Ascending aorta (tissue), 2 donors: ENCODE measurements at regions of chr11 and their contacts with region 1.

Region 1: DNA sequence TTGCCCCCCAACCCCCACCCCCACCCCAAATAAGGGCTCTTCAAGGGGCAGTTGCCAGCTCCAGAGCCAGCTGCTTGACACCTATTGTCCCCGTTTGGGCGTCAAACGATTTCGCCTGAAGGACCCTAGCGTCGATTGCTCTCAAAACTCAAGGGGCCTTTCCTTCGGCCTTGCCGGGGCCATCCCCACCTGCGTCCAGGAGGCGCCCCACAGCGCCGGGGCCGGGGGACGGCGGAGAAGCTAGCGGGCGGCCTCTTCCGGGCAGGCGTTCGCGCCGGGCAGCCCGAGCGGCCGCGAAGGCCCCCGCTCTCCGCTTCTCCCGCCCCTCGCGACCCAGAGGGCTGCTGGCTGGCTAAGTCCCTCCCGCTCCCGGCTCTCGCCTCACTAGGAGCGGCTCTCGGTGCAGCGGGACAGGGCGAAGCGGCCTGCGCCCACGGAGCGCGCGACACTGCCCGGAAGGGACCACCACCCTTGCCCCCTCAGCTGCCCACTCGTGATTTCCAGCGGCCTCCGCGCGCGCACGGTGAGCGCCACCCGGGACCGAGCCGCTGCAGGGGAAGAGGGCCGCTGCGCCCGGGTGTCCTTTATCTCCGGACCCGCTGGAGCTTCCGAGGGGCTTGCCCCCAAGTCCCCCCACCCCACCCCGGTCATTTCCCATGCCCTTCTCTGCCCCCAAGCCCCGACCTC is at the start of gene CAPRIN1:
- DNase-seq: peak; percentile 23 to 91
- H3K4me3 ChIP-seq: peak within 1 kb of the TSS; percentile 92 to 99
- H3K27ac ChIP-seq: peak within 1 kb of the TSS; percentile 98 to 100
- H3K4me1 ChIP-seq: peaks cover 6 to 26% of the 10 kb centered on the region in 2 donors
- H3K27me3 ChIP-seq: no peaks in the 10 kb centered on the region
- CTCF ChIP-seq: peak in 1 of 3 experiments; percentile 8
- total RNA-seq, gene CAPRIN1: 155 TPM

Region 2: DNA sequence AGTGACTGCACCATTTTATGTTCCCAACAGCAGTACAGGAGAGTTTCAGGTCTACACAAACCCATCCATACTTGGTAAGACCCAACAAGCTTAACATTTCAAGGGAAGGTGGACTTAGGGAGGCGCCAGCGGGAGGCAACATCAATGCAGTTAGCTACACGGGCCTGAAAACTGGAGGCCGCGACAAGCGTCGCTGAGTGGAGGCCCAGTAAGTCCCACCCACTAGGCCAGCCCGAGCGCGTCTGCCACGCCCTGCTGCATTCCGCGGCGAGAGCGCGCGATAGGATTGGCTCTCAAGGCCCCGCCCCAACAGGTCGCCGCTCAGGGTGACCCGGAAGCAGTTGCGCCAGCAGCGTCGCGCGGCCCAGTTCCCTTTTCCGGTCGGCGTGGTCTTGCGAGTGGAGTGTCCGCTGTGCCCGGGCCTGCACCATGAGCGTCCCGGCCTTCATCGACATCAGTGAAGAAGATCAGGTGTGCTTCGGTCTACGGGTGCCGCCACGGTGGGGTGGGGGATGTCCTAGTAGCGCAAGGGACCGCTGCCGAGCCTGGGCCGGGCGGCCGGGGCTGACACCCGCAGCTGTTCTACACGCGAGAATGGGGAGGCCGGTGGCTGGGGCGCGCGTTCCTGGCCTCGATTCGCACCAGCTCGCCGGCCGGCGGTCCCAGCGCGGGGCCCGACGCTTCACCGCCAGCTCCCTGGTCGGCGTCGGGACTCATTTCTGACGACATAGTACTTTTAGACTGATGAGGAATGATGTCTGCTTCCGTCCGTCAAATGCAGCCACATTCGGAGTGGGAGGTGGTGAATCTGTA is 1467.8 kb before region 1 on chr11 and contains the start of gene EIF3M:
- intact Hi-C with region 1: loop called (anchors 5 kb)
- DNase-seq: peak; percentile 82 to 97
- H3K4me3 ChIP-seq: peak within 1 kb of the TSS; percentile 73 to 94
- H3K27ac ChIP-seq: peak within 1 kb of the TSS; percentile 64 to 86
- H3K4me1 ChIP-seq: peaks cover 7 to 9% of the 10 kb centered on the region in 2 donors
- H3K27me3 ChIP-seq: no peaks in the 10 kb centered on the region
- CTCF ChIP-seq: no peak
- total RNA-seq, gene EIF3M: 149 TPM

Region 3: DNA sequence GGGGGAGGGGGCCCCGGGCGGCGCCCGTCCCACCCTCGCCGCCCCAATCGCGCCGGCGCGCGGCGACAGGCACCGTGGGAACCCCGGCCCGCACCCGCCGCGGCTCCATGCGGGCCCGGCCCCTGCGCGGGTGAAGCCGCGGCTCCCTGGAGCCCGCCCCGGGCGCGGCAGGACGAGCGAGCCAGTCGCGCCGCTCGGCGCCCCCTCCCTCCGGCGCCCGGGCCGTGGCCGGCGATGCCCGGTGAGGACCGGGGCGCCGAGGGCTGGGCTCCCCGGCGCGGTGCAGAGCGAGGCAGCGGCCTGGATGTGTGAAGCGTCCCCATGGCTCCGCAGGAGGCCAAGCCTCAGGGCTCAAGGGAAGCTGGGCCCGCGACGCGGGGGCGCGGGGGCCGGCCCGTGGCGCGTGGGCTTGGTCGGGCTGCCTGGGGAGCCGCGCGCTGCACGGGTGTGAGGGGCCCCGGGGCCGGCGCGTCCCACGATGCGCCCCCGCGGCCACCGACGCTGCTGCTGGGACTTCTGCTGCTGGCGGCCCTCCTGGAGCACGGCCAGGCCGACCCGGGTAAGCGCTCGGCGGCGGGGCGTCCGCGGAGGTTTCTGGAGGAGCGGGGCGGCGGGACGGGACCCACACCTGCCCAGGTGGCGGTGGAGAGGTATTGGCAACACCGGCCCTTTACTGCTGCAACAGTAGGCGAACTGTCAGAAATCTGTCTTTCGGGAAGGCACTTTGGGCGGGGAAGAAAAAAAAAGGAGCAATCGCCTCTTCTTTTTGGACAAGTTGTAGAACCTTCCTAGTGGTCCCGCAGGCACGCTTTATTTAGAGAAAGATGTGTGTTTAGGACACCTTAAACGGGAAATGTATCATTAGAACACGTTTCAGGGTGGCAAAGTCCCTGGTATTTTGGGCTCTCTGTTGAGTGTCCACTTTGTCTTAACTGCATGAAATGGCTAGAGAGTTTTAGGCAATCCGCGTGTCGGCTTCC is 674.9 kb before region 1 on chr11:
- intact Hi-C with region 1: no loop called
- DNase-seq: no peak
- H3K4me3 ChIP-seq: peak overlapping the region; percentile 49 to 70
- H3K27ac ChIP-seq: no peak overlapping the region
- H3K4me1 ChIP-seq: peaks cover 0 to 4% of the 10 kb centered on the region in 2 donors
- H3K27me3 ChIP-seq: no peaks in the 10 kb centered on the region
- CTCF ChIP-seq: no peak

Region 4: DNA sequence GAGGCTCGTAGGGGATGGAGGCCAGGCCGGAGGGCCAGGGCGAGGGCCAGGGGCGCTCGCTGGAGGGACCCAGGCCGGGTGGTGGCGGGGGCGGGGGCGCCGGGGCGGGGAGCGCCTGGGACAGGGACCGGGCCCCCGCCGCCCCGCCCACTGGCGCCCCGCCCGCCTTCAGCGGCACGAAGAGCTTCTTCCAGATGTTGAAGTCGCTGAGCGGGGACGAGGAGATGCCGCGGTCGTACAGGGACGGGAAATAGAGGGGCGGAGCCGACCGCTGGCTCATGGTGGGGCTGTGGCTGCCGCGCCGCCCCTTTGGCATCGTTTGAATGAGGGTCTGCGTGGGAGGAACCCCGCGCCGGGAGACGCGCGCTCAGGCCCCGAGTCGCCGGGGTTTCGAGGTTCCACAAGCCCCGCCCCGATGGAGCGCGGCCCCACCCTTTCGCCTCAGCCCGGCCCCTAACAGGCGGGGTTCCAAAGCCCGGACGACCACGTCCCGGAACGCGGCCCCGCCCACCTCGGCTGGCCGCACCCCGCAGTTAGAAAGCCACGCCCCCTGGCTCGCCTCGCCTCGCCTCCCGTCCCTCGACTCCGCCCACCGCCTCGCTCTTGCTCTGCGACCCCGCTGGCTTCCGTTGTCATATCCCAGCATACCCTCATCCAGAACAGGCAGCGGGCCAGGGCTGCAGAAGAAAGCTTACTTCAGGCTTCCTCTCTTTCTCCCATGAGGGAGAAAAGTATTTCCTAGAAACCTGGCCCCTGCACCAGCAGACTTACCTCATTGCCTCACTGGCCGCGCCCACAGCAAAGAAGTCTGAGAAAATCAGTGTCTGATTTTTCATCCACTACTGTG is 350.8 kb before region 1 on chr11 and contains the start of gene C11orf91:
- intact Hi-C with region 1: loop called (anchors 5 kb)
- DNase-seq: peak; percentile 72 to 96
- H3K4me3 ChIP-seq: peak within 1 kb of the TSS; percentile 67 to 72
- H3K27ac ChIP-seq: peak within 1 kb of the TSS; percentile 58 to 67
- H3K4me1 ChIP-seq: peaks cover 0 to 10% of the 10 kb centered on the region in 2 donors
- H3K27me3 ChIP-seq: no peaks in the 10 kb centered on the region
- CTCF ChIP-seq: no peak
- total RNA-seq, gene C11orf91: not detected

Region 5: GRCh38 chr11:33996498-33997454 is 54.7 kb before region 1 on chr11:
- intact Hi-C with region 1: loop called (anchors 1 kb)
- DNase-seq: peak in 1 of 2 donors; percentile 86
- H3K4me3 ChIP-seq: peak overlapping the region; percentile 7 to 33
- H3K27ac ChIP-seq: no peak overlapping the region
- H3K4me1 ChIP-seq: no peaks in the 10 kb centered on the region
- H3K27me3 ChIP-seq: no peaks in the 10 kb centered on the region
- CTCF ChIP-seq: peak; percentile 79 to 85 (median 81)

Region 6: DNA sequence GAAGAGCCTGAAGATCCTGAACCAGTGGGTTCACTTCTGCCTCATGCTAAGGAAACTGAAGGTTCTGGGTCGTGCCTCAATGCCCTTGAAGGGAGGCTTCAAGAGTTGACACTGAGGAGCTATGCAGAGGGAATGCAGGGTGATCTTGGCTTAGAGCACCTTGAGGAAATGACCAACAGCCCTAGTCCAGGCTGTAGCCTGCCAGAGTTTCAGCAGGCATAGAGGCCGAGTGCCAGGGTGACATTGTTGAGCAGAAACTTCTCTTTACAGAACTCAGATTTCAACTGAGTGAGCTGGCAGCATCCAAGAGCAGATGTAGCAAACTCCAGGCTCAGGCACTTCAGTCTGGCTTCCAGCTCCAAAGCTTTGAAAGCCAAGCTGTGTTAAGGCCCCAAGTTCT is 23.1 kb before region 1 on chr11:
- intact Hi-C with region 1: loop called (anchors 2 kb)
- DNase-seq: peak in 1 of 2 donors; percentile 83
- H3K4me3 ChIP-seq: no peak overlapping the region
- H3K27ac ChIP-seq: peak overlapping the region; percentile 53 to 80
- H3K4me1 ChIP-seq: peaks cover 0 to 17% of the 10 kb centered on the region in 2 donors
- H3K27me3 ChIP-seq: no peaks in the 10 kb centered on the region
- CTCF ChIP-seq: no peak

Region 7: GRCh38 chr11:34105079-34105956 is 53.8 kb after region 1 on chr11 and contains the start of gene NAT10:
- intact Hi-C with region 1: loop called (anchors 1 kb)
- DNase-seq: peak; percentile 93 to 99
- H3K4me3 ChIP-seq: peak within 1 kb of the TSS; percentile 82 to 86
- H3K27ac ChIP-seq: peak within 1 kb of the TSS; percentile 93 to 95
- H3K4me1 ChIP-seq: peaks cover 4 to 5% of the 10 kb centered on the region in 2 donors
- H3K27me3 ChIP-seq: no peaks in the 10 kb centered on the region
- CTCF ChIP-seq: no peak
- total RNA-seq, gene NAT10: 11.3 TPM

Region 8: GRCh38 chr11:34274723-34275401 is 223.4 kb after region 1 on chr11:
- intact Hi-C with region 1: loop called (anchors 5 kb)
- DNase-seq: peak; percentile 71 to 97
- H3K4me3 ChIP-seq: no peak overlapping the region
- H3K27ac ChIP-seq: peak overlapping the region; percentile 76 to 80
- H3K4me1 ChIP-seq: peaks cover 4 to 13% of the 10 kb centered on the region in 2 donors
- H3K27me3 ChIP-seq: no peaks in the 10 kb centered on the region
- CTCF ChIP-seq: no peak